ENCODE measurements at regions of chr17 and their contacts with region 1.

Region 1: DNA sequence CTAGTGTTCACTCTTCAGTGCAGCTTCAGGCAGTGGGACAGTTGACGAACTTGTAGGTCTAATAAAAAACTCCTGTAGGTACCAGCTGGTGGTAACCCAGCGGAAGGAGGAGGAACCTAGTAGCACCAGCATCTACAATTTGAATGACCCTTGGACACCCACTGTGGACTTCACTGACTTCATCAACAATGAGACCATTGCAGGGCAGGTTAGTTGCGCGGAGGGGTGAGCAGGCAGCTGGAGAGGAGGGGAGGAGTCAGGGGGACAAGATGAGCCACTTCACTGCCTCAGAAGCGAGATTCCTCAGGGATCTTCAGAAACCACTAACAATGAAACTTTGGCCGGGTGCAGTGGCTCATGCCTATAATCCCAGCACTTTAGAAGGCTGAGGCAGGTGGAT is 22.3 kb downstream of the AOC3 start:
- DNase-seq: no peak
- H3K4me3 ChIP-seq: no peak overlapping the region
- H3K27ac ChIP-seq: no peak overlapping the region
- H3K4me1 ChIP-seq: no peaks in the 10 kb centered on the region
- H3K27me3 ChIP-seq: no peaks in the 10 kb centered on the region
- CTCF ChIP-seq: no peak

Region 2: DNA sequence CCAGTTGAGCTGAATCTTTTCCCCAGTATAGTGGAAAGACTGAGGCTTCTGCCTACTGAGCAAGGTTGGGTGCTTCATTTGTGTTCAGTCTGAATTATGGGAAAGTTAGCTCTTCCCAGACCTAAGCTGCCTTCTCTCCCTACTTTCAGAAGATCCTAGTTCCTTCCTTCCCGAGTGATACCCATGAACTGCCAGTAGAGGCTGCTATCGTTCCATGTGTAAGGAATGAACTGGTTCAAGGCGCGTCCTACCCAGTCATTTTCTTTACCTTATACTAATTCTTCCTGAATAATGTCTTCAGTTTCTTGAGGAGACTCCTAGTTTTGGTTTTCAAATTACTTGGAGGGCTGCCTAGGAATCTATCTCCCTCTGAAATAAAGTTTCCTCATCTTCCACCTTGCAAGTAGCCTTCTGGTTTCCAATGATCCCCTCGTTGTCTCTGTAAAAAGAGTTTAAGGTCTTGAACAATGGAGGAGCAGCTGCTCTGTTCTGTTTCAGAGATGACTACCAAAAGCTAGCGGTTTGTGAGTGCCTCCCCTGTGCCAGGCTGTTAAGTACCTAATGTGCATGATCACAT is 29.9 kb before region 1 on chr17:
- CTCF ChIA-PET with region 1: no interaction called
- POLR2A ChIA-PET with region 1: no interaction called
- intact Hi-C with region 1: no loop called
- DNase-seq: peak; percentile 45
- H3K4me3 ChIP-seq: no peak overlapping the region
- H3K27ac ChIP-seq: no peak overlapping the region
- H3K4me1 ChIP-seq: no peaks in the 10 kb centered on the region
- H3K27me3 ChIP-seq: no peaks in the 10 kb centered on the region
- CTCF ChIP-seq: peak; percentile 66

Region 3: GRCh38 chr17:42895185-42895555 is 21.9 kb after region 1 on chr17:
- CTCF ChIA-PET with region 1: interaction called, 12 read pairs
- POLR2A ChIA-PET with region 1: no interaction called
- intact Hi-C with region 1: no loop called
- DNase-seq: no peak
- H3K4me3 ChIP-seq: no peak overlapping the region
- H3K27ac ChIP-seq: no peak overlapping the region
- H3K4me1 ChIP-seq: no peaks in the 10 kb centered on the region
- H3K27me3 ChIP-seq: no peaks in the 10 kb centered on the region
- CTCF ChIP-seq: no peak

Region 4: GRCh38 chr17:42997984-42998938 is 124.9 kb after region 1 on chr17 and contains the start of gene RPL27:
- CTCF ChIA-PET with region 1: no interaction called
- POLR2A ChIA-PET with region 1: no interaction called
- intact Hi-C with region 1: no loop called
- DNase-seq: peak; percentile 98
- H3K4me3 ChIP-seq: peak within 1 kb of the TSS; percentile 92
- H3K27ac ChIP-seq: peak within 1 kb of the TSS; percentile 92
- H3K4me1 ChIP-seq: peaks cover 6% of the 10 kb centered on the region
- H3K27me3 ChIP-seq: no peaks in the 10 kb centered on the region
- CTCF ChIP-seq: peak; percentile 65
- total RNA-seq, gene RPL27: 547 and 560 TPM in 2 replicates